ENCODE measurements at regions of chr12 and their contacts with region 1.

Region 1: GRCh38 chr12:68342966-68343365 is 10.8 kb upstream of the MDM1 start:
- DNase-seq: no peak
- H3K4me3 ChIP-seq: no peak overlapping the region
- H3K27ac ChIP-seq: no peak overlapping the region
- H3K4me1 ChIP-seq: peaks cover 3% of the 10 kb centered on the region
- H3K27me3 ChIP-seq: peaks cover 2% of the 10 kb centered on the region
- CTCF ChIP-seq: no peak

Region 2: DNA sequence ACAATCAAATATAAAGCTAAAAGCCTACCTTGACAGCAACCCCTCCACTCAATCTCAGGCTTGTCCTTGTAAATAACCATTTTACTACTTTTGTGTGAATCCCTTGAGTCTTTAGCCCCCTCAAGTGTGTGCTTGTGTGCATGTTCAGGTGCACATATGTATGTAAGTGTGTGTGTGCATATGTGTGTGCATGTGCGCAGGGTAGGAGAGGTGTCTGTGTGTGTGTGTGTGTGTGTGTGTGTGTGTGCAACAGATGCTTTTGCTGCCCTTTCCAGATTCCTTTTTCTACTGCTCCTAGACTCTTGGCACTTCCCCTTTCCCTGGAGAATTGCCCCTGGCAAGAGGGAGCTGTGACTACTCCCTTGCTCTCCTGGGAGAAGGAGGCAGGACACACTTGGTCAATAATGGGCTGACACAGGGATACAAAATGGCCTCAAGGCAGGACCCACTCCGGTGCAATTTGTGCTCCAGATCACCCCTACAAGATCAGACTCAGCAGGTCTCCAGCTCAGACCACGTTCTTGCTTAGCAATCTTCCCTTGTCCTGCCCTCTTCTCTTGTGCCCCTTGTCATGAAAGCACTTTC is 256.9 kb before region 1 on chr12:
- CTCF ChIA-PET with region 1: no interaction called
- dilution Hi-C with region 1: no loop called
- in situ Hi-C with region 1: no loop called
- intact Hi-C with region 1: no loop called
- DNase-seq: no peak
- H3K4me3 ChIP-seq: no peak overlapping the region
- H3K27ac ChIP-seq: no peak overlapping the region
- H3K4me1 ChIP-seq: no peaks in the 10 kb centered on the region
- H3K27me3 ChIP-seq: no peaks in the 10 kb centered on the region
- CTCF ChIP-seq: no peak

Region 3: GRCh38 chr12:68250454-68250853 is 92.5 kb before region 1 on chr12:
- CTCF ChIA-PET with region 1: no interaction called
- dilution Hi-C with region 1: loop called (anchors 5 kb)
- in situ Hi-C with region 1: no loop called
- intact Hi-C with region 1: no loop called
- DNase-seq: peak; percentile 52
- H3K4me3 ChIP-seq: no peak overlapping the region
- H3K27ac ChIP-seq: no peak overlapping the region
- H3K4me1 ChIP-seq: no peaks in the 10 kb centered on the region
- H3K27me3 ChIP-seq: no peaks in the 10 kb centered on the region
- CTCF ChIP-seq: no peak

Region 4: GRCh38 chr12:68393417-68393816 is 50.5 kb after region 1 on chr12:
- CTCF ChIA-PET with region 1: no interaction called
- dilution Hi-C with region 1: loop called (anchors 5 kb)
- in situ Hi-C with region 1: no loop called
- intact Hi-C with region 1: no loop called
- DNase-seq: no peak
- H3K4me3 ChIP-seq: no peak overlapping the region
- H3K27ac ChIP-seq: no peak overlapping the region
- H3K4me1 ChIP-seq: no peaks in the 10 kb centered on the region
- H3K27me3 ChIP-seq: no peaks in the 10 kb centered on the region
- CTCF ChIP-seq: no peak

Region 5: DNA sequence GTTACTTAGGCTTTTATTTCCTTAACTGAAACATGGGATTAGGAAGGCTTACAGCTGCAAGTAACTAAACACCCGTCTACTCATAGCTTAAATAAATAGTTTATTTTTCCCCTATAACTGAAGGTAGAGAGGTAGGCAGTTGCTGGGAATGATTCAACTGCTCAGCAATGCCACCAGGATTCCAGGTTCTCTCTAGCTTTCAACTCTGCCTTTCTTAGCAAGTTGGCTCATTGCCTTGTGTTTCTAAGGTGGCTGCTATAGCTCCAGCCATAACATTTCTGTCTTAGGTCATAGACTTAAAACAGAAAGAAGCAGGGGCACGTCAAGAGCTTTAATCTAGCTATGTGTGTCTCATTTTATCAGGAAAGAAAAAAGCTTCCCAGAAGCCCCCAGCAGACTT is 92.8 kb after region 1 on chr12:
- CTCF ChIA-PET with region 1: no interaction called
- dilution Hi-C with region 1: loop called (anchors 5 kb)
- in situ Hi-C with region 1: no loop called
- intact Hi-C with region 1: no loop called
- DNase-seq: peak; percentile 71
- H3K4me3 ChIP-seq: no peak overlapping the region
- H3K27ac ChIP-seq: no peak overlapping the region
- H3K4me1 ChIP-seq: peaks cover 14% of the 10 kb centered on the region
- H3K27me3 ChIP-seq: no peaks in the 10 kb centered on the region
- CTCF ChIP-seq: no peak

Measured in mammary epithelial cell (primary cell).